K562 (cell line): ENCODE measurements at regions of chr6 and their contacts with region 1.

Region 1: GRCh38 chr6:33323623-33323948 is 6.0 kb upstream of the ZBTB22 start:
- DNase-seq: peak in 1 of 4 experiments; percentile 35
- ATAC-seq: peak; percentile 3; the same call in 2 of the 3 replicates
- H3K4me3 ChIP-seq: peak overlapping the region; percentile 64
- H3K27ac ChIP-seq: peak overlapping the region; percentile 89
- H3K4me1 ChIP-seq: peaks cover 37 to 49% of the 10 kb centered on the region in 2 experiments
- H3K27me3 ChIP-seq: no peaks in the 10 kb centered on the region
- CTCF ChIP-seq: no peak; a peak in 1 of 6 replicates
- EP300 ChIP-seq: no peak
- POLR2A ChIP-seq: no peak; the same call in 1 of the 2 replicates
- RAD21 ChIP-seq: no peak

Region 2: DNA sequence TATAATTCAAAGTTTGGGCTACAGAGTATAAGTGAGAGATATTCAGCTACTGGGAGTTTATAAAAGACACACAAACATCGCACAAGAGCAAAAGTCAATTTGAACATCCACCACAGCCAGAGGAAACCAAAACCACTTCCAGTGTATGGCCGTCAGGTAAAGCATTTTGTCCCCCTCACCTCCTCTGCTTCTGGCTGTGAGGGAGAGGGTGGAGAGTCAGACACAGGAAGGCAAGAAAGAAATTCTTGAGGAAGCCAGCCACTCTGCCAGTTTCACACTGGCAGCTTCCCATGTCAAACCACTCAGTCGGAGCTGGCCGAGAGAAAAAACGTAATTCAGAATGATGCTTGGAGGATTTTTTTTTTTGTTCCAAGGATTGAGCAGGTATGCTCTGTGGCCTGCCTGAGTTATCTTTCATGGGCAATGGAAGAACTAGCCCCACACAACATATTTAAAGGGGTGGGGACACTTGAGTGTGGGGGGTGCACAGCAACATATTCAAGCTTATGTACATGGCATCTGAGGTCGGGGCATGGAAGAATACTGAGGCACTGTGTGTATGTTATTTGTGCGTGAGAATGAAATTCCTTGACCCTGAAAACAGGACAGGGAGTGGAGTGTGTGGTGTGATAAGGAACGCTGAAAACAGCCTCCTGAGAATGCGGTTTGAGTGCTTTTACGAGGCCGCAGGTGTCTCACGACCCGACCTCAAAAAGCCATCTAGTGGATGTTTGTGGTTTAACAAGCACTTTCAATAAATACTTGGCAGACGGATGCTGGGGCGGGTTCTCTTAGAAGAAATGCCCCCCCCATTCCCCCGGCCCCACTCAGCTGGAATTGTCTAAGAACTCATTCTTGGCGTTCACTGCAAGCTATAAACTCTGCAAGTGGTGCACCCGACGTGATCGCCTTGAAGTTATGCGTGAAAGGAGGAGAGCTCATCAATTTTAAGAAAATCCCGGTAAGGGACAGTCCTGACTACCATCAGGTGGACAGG is 21.4 kb after region 1 on chr6:
- CTCF ChIA-PET with region 1: interaction called, 3 read pairs
- POLR2A ChIA-PET with region 1: interaction called, 3 read pairs
- in situ Hi-C with region 1: no loop called
- intact Hi-C with region 1: loop called (anchors 1 kb)
- DNase-seq: peak; percentile 84 to 93 (median 84)
- ATAC-seq: peak; percentile 85
- H3K4me3 ChIP-seq: no peak overlapping the region
- H3K27ac ChIP-seq: peak overlapping the region; percentile 1; the same call in 1 of the 3 replicates
- H3K4me1 ChIP-seq: peaks cover 5 to 12% of the 10 kb centered on the region in 2 experiments; a peak in 3 of 5 replicates
- H3K27me3 ChIP-seq: no peaks in the 10 kb centered on the region
- CTCF ChIP-seq: peak; percentile 76 to 81 (median 80)
- EP300 ChIP-seq: peak; percentile 61
- POLR2A ChIP-seq: no peak
- RAD21 ChIP-seq: peak; percentile 72 to 83